Heart right ventricle (tissue), 16 donors: ENCODE measurements at regions of chr17 and their contacts with region 1.

Region 1: DNA sequence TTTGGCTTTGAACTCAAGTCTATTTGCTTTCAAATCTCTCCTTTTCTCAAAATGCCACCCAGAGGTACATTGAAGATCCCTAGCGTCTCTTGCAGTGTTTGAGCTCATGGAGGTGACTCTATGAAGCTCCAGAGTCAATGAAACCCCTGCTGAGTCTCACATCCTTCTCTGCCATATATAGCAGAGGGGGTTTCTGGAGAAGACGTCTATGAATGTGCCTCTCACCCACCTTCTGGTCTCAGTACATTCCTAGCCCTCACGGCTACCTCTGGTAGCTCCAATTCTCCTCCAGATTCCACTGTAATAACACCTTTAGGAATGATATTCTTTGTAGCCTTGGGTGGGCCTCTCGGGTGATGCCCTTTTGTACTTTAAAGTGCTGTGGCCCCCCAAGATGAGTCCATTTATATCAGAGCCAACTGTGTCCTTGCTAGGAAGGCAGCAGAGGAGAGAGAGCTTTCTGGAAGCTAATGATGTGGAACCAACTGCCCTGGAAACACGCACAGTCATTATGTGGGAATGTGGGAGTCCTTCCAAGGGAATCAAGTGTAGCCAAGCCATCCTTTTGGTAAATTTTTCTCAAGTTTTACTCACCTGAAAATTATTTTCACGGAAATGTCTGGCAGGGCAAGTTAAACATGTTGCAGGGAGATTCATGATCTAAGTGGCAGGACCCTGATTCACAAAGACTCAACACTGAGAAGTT is 123.4 kb downstream of the ASIC2 start:
- DNase-seq: no peak
- ATAC-seq: no peak
- H3K4me3 ChIP-seq: no peak overlapping the region
- H3K27ac ChIP-seq: no peak overlapping the region
- H3K4me1 ChIP-seq: peaks cover 0 to 3% (median 0%) of the 10 kb centered on the region in 9 donors
- H3K27me3 ChIP-seq: peaks cover 0 to 29% (median 15%) of the 10 kb centered on the region in 7 donors
- CTCF ChIP-seq: no peak

Region 2: GRCh38 chr17:33120103-33120502 is 49.6 kb before region 1 on chr17:
- intact Hi-C with region 1: loop called in 1 of 10 experiments (anchors 10 kb)
- DNase-seq: no peak
- ATAC-seq: no peak
- H3K4me3 ChIP-seq: no peak overlapping the region
- H3K27ac ChIP-seq: no peak overlapping the region
- H3K4me1 ChIP-seq: no peaks in the 10 kb centered on the region
- H3K27me3 ChIP-seq: peaks cover 0 to 54% (median 29%) of the 10 kb centered on the region in 7 donors
- CTCF ChIP-seq: no peak